HCT116 (cell line): ENCODE measurements at regions of chr1 and their contacts with region 1.

Region 1: GRCh38 chr1:3012456-3013291 is 8.6 kb upstream of the ACTRT2 start:
- DNase-seq: no peak
- ATAC-seq: peak; percentile 94
- H3K4me3 ChIP-seq: no peak overlapping the region
- H3K27ac ChIP-seq: no peak overlapping the region; the same call in 1 of the 2 replicates
- H3K4me1 ChIP-seq: no peaks in the 10 kb centered on the region
- H3K27me3 ChIP-seq: no peaks in the 10 kb centered on the region
- CTCF ChIP-seq: peak; percentile 62 to 77 (median 64)
- POLR2A ChIP-seq: no peak
- RAD21 ChIP-seq: peak; percentile 84

Region 2: GRCh38 chr1:2821966-2822620 is 190.6 kb before region 1 on chr1:
- CTCF ChIA-PET with region 1: no interaction called
- POLR2A ChIA-PET with region 1: no interaction called
- RAD21 ChIA-PET with region 1: no interaction called
- intact Hi-C with region 1: loop called (anchors 5 kb)
- DNase-seq: no peak
- ATAC-seq: peak; percentile 99
- H3K4me3 ChIP-seq: no peak overlapping the region
- H3K27ac ChIP-seq: no peak overlapping the region
- H3K4me1 ChIP-seq: 0 out of 4 replicates have a peak, but pooled peaks cover 0 to 2% of the 10 kb centered on the region in 2 experiments
- H3K27me3 ChIP-seq: no peaks in the 10 kb centered on the region
- CTCF ChIP-seq: peak; percentile 62 to 71 (median 70)
- POLR2A ChIP-seq: no peak
- RAD21 ChIP-seq: peak; percentile 91

Region 3: DNA sequence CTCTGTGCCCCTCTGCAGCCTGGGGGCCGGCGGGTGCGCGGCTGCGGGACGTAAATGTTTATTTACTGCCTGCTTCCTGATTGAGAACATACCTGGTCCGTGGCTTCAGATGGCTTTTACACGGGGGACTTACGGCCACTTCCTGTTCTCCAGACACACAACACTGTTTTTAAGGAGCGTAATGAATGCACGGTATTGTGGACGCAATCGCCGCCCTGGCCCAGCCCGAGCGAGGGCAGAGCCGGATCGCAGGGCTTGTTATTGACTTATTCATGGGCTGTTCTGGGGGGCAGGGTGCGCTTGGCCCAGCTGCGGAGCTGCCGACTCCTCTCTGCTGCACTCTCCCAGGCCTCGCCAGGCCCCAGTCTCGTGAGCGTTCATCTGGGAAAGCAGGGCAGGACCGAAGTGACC is 44.2 kb before region 1 on chr1:
- CTCF ChIA-PET with region 1: no interaction called
- POLR2A ChIA-PET with region 1: no interaction called
- RAD21 ChIA-PET with region 1: no interaction called
- intact Hi-C with region 1: no loop called
- DNase-seq: no peak
- ATAC-seq: no peak
- H3K4me3 ChIP-seq: no peak overlapping the region
- H3K27ac ChIP-seq: no peak overlapping the region
- H3K4me1 ChIP-seq: no peaks in the 10 kb centered on the region
- H3K27me3 ChIP-seq: no peaks in the 10 kb centered on the region
- CTCF ChIP-seq: no peak
- POLR2A ChIP-seq: no peak
- RAD21 ChIP-seq: no peak

Region 4: DNA sequence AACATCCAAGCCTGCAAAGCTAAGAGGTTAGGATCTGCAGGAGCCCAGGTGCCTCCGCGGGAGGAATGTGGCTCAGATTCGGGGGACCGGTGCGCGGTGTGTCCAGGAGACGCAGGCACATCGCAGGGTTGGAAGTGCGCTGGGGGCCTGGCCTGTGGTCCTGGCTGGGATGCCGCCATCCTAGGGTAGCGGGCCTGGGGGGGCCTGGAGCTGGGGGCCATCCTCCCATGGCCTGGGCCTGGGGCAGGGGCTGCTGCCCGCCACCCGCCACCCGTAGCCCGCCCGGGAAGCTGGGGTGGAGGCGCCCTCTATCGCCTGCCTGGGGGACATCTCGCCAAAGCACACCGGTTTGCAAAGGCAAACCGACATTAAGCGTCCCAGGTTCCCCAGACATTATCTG is 271.2 kb after region 1 on chr1:
- CTCF ChIA-PET with region 1: no interaction called
- POLR2A ChIA-PET with region 1: no interaction called
- RAD21 ChIA-PET with region 1: no interaction called
- intact Hi-C with region 1: loop called (anchors 1 kb)
- DNase-seq: no peak
- ATAC-seq: peak; percentile 86
- H3K4me3 ChIP-seq: no peak overlapping the region
- H3K27ac ChIP-seq: no peak overlapping the region
- H3K4me1 ChIP-seq: no peaks in the 10 kb centered on the region
- H3K27me3 ChIP-seq: no peaks in the 10 kb centered on the region
- CTCF ChIP-seq: peak; percentile 57 to 77 (median 71)
- POLR2A ChIP-seq: no peak
- RAD21 ChIP-seq: peak; percentile 79

Region 5: DNA sequence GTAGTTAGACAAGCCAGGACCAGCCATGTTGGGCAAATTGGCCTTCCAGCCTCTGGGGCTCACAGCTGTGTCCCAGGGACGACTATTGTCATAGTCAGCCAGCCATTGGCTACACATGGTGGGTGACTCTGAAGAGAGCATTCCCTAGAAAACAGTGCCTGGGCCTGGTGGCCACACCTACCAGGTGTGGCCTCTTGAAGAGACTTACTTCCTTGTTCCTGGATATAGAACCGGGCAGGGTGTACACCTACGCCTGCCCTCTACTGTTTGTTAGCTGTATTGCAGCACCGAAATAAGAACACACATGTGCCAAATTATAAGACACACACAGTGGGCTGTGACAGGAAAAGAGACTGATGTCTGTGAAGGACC is 307.2 kb after region 1 on chr1:
- CTCF ChIA-PET with region 1: interaction called, 8 read pairs
- POLR2A ChIA-PET with region 1: no interaction called
- RAD21 ChIA-PET with region 1: interaction called in 1 of 2 experiments, 3 read pairs
- intact Hi-C with region 1: loop called (anchors 1 kb)
- DNase-seq: peak; percentile 85
- ATAC-seq: peak; percentile 96
- H3K4me3 ChIP-seq: no peak overlapping the region
- H3K27ac ChIP-seq: peak overlapping the region; percentile 28; the same call in 1 of the 2 replicates
- H3K4me1 ChIP-seq: peaks cover 22 to 38% of the 10 kb centered on the region in 2 experiments
- H3K27me3 ChIP-seq: no peaks in the 10 kb centered on the region
- CTCF ChIP-seq: peak; percentile 70 to 91 (median 87); a peak in 5 of 6 replicates
- POLR2A ChIP-seq: no peak
- RAD21 ChIP-seq: peak; percentile 81

Region 6: GRCh38 chr1:3423245-3423829 is 410.7 kb after region 1 on chr1:
- CTCF ChIA-PET with region 1: interaction called, 18 read pairs
- POLR2A ChIA-PET with region 1: no interaction called
- RAD21 ChIA-PET with region 1: interaction called in 1 of 2 experiments, 6 read pairs
- intact Hi-C with region 1: loop called (anchors 1 kb)
- DNase-seq: no peak
- ATAC-seq: no peak
- H3K4me3 ChIP-seq: no peak overlapping the region
- H3K27ac ChIP-seq: no peak overlapping the region
- H3K4me1 ChIP-seq: peaks cover 0 to 8% of the 10 kb centered on the region in 2 experiments; a peak in 2 of 4 replicates
- H3K27me3 ChIP-seq: no peaks in the 10 kb centered on the region
- CTCF ChIP-seq: no peak
- POLR2A ChIP-seq: no peak
- RAD21 ChIP-seq: no peak